CD4-positive, alpha-beta memory T cell (primary cell): ENCODE measurements at regions of chr17 and their contacts with region 1.

Region 1: GRCh38 chr17:48543107-48543853 is 1.6 kb downstream of the HOXB2 start:
- DNase-seq: peak; percentile 51 to 66 (median 61)
- H3K4me3 ChIP-seq: peak overlapping the region; percentile 74 to 86
- H3K4me3 Mint-ChIP-seq: peak overlapping the region; percentile 94 to 100 (median 99)
- H3K27ac ChIP-seq: peak overlapping the region; percentile 86
- H3K27ac Mint-ChIP-seq: peak overlapping the region; percentile 87 to 99 (median 97)
- H3K4me1 ChIP-seq: peaks cover 28% of the 10 kb centered on the region
- H3K4me1 Mint-ChIP-seq: peaks cover 13 to 75% (median 41%) of the 10 kb centered on the region in 4 donors
- H3K27me3 ChIP-seq: no peaks in the 10 kb centered on the region
- H3K27me3 Mint-ChIP-seq: peaks cover 6 to 7% of the 10 kb centered on the region in 2 donors

Region 2: DNA sequence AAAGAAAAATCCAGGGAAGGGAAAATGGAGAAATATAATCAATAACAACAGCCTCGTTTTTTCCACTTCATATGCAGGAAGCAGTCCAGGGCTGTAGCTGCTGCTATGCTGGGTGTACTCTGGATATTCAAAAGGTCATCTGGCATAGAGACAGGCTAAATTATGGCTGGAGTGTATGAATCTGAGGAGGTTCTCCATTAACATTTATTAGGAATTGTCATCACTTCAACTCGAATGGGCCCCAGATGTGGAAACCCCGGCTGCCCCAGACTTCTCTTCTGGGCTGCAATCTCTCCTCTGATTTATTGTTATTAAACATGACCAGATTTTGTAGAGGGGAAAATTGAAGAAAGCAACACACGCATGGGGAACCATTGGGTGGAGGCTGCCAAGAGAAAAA is 79.8 kb before region 1 on chr17:
- CTCF ChIA-PET with region 1: no interaction called
- POLR2A ChIA-PET with region 1: no interaction called
- intact Hi-C with region 1: no loop called
- DNase-seq: no peak
- H3K4me3 ChIP-seq: no peak overlapping the region
- H3K4me3 Mint-ChIP-seq: no peak overlapping the region
- H3K27ac ChIP-seq: no peak overlapping the region
- H3K27ac Mint-ChIP-seq: peak overlapping the region in 1 of 7 donors; percentile 61
- H3K4me1 ChIP-seq: no peaks in the 10 kb centered on the region
- H3K4me1 Mint-ChIP-seq: peaks cover 0 to 7% (median 3%) of the 10 kb centered on the region in 4 donors
- H3K27me3 ChIP-seq: no peaks in the 10 kb centered on the region
- H3K27me3 Mint-ChIP-seq: peaks cover 0 to 1% of the 10 kb centered on the region in 2 donors

Region 3: GRCh38 chr17:48505787-48506645 is 37.3 kb before region 1 on chr17:
- CTCF ChIA-PET with region 1: interaction called, 4 read pairs
- POLR2A ChIA-PET with region 1: interaction called, 7 read pairs
- intact Hi-C with region 1: loop called (anchors 5 kb)
- DNase-seq: peak; percentile 35 to 90 (median 59)
- H3K4me3 ChIP-seq: no peak overlapping the region
- H3K4me3 Mint-ChIP-seq: no peak overlapping the region
- H3K27ac ChIP-seq: no peak overlapping the region
- H3K27ac Mint-ChIP-seq: peak overlapping the region; percentile 20 to 84 (median 65)
- H3K4me1 ChIP-seq: peaks cover 12% of the 10 kb centered on the region
- H3K4me1 Mint-ChIP-seq: peaks cover 11 to 18% (median 15%) of the 10 kb centered on the region in 4 donors
- H3K27me3 ChIP-seq: no peaks in the 10 kb centered on the region
- H3K27me3 Mint-ChIP-seq: peaks cover 0 to 1% of the 10 kb centered on the region in 2 donors

Region 4: GRCh38 chr17:48555258-48556228 is 12.3 kb after region 1 on chr17:
- CTCF ChIA-PET with region 1: interaction called, 6 read pairs
- POLR2A ChIA-PET with region 1: interaction called, 16 read pairs
- intact Hi-C with region 1: no loop called
- DNase-seq: no peak
- H3K4me3 ChIP-seq: no peak overlapping the region
- H3K4me3 Mint-ChIP-seq: peak overlapping the region; percentile 87 to 96 (median 90)
- H3K27ac ChIP-seq: no peak overlapping the region
- H3K27ac Mint-ChIP-seq: peak overlapping the region in 6 of 7 donors; percentile 45 to 93 (median 56)
- H3K4me1 ChIP-seq: no peaks in the 10 kb centered on the region
- H3K4me1 Mint-ChIP-seq: peaks cover 6 to 10% (median 10%) of the 10 kb centered on the region in 4 donors
- H3K27me3 ChIP-seq: no peaks in the 10 kb centered on the region
- H3K27me3 Mint-ChIP-seq: peaks cover 2 to 9% of the 10 kb centered on the region in 2 donors

Region 5: GRCh38 chr17:48577946-48578615 is 34.8 kb after region 1 on chr17 and contains the start of gene HOXB4:
- CTCF ChIA-PET with region 1: interaction called, 6 read pairs
- POLR2A ChIA-PET with region 1: interaction called, 7 read pairs
- intact Hi-C with region 1: loop called (anchors 1 kb)
- DNase-seq: peak; percentile 60 to 80 (median 64)
- H3K4me3 ChIP-seq: peak within 1 kb of the TSS; percentile 44 to 64
- H3K4me3 Mint-ChIP-seq: peak within 1 kb of the TSS; percentile 90 to 97 (median 93)
- H3K27ac ChIP-seq: peak within 1 kb of the TSS; percentile 54
- H3K27ac Mint-ChIP-seq: peak within 1 kb of the TSS; percentile 87 to 95 (median 91)
- H3K4me1 ChIP-seq: peaks cover 52% of the 10 kb centered on the region
- H3K4me1 Mint-ChIP-seq: peaks cover 16 to 65% (median 41%) of the 10 kb centered on the region in 4 donors
- H3K27me3 ChIP-seq: peaks cover 14% of the 10 kb centered on the region
- H3K27me3 Mint-ChIP-seq: peaks cover 27 to 39% of the 10 kb centered on the region in 2 donors
- total RNA-seq, gene HOXB4: 3.1 to 4.5 TPM

Region 6: DNA sequence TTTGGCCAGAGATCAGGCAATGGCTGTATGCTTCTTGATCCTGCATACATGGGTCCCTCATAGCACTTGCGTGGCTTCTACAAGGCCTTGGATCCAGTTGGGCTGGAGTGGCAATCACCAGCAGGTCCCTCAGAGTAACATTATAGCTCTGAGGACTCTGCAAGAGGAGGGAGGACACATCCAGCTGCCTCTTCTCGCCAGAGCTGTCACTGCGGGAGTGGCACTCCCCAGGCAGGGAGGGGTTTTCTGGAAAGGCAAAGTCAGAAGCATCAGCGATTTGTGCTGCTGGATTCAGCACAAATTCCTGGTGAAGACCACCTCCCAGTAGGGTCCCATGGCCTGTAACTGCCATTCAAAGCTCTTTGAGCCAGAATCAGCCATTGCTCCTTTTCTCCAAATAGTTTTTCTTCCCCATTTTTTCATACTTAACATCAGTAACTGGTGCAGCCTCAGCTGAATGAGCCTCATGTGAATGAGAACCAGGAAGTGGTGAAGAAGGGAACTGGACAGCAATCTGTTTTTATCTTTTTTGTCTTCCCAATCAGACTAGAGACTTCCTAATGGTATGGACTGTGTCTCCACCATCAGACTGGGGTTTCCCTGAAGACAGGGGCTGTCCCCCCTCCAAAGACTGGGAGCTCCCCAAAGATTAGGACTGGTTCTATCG is 225.9 kb after region 1 on chr17:
- CTCF ChIA-PET with region 1: no interaction called
- POLR2A ChIA-PET with region 1: no interaction called
- intact Hi-C with region 1: no loop called
- DNase-seq: no peak
- H3K4me3 ChIP-seq: no peak overlapping the region
- H3K4me3 Mint-ChIP-seq: no peak overlapping the region
- H3K27ac ChIP-seq: no peak overlapping the region
- H3K27ac Mint-ChIP-seq: no peak overlapping the region
- H3K4me1 ChIP-seq: no peaks in the 10 kb centered on the region
- H3K4me1 Mint-ChIP-seq: no peaks in the 10 kb centered on the region
- H3K27me3 ChIP-seq: no peaks in the 10 kb centered on the region
- H3K27me3 Mint-ChIP-seq: peaks cover 38 to 39% of the 10 kb centered on the region in 2 donors